Transverse colon (tissue), 4 donors: ENCODE measurements at regions of chrX and their contacts with region 1.

Region 1: DNA sequence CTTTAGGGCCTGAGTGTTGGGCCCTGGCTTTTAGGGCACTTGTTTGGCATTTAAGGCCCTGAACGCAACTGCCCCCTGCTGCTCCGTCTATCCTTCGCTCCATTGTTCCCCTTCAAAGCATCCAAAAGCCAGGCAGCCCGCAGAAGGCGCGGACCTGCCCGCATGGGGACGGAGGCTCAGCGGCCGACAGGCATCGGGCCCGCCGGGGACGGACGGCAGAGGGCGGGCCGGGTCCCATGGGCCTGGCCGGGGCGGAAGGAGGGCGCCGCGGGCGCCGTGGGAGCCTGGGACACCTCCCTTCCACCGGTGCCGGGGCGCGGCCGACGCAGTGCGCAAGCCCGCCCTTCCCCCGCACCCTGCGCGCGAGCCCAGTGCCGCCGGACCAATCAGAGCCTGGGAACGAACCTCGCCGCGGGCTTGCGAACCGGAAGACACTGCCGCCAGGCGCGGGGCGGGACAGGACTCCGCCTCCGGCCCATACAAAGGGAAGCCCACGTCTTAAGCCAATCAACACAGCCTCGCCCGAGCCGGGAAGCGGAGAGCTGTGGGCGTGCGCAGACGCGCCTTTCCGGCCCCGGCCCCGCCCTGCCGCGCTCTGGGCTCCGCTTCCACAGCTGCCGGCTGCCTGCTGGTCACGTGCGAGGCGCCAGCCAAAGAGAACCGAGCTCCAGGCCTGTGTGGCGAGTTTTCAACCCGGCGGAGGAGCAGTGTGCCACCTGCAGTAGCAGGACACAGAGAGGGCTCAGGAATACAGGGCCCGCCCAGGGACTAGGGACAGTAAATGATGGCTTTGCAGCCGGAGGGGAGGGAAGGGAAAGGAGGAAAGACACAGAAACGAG is 2.1 kb upstream of the ARHGAP4 start:
- DNase-seq: peak; percentile 96
- H3K4me3 ChIP-seq: peak overlapping the region; percentile 52 to 63 (median 53)
- H3K27ac ChIP-seq: peak overlapping the region; percentile 96 to 99 (median 98)
- H3K4me1 ChIP-seq: peaks cover 7 to 26% (median 16%) of the 10 kb centered on the region in 4 donors
- H3K27me3 ChIP-seq: no peaks in the 10 kb centered on the region
- CTCF ChIP-seq: no peak
- EP300 ChIP-seq: no peak
- POLR2A ChIP-seq: peak; percentile 65

Region 2: GRCh38 chrX:153794018-153794896 is 133.9 kb before region 1 on chrX and contains the starts of genes IDH3G and SSR4:
- in situ Hi-C with region 1: loop called in 1 of 4 experiments (anchors 25 kb)
- intact Hi-C with region 1: no loop called
- DNase-seq: peak; percentile 93
- H3K4me3 ChIP-seq: peak within 1 kb of the TSS; percentile 52 to 79 (median 68)
- H3K27ac ChIP-seq: peak within 1 kb of the TSS; percentile 91 to 99 (median 98)
- H3K4me1 ChIP-seq: peaks cover 0 to 26% (median 22%) of the 10 kb centered on the region in 4 donors
- H3K27me3 ChIP-seq: no peaks in the 10 kb centered on the region
- CTCF ChIP-seq: peak in 1 of 5 experiments; percentile 17
- EP300 ChIP-seq: no peak
- POLR2A ChIP-seq: peak; percentile 52
- total RNA-seq, gene IDH3G: 77.5 to 203 (median 117) TPM
- total RNA-seq, gene SSR4: 16.1 to 165 (median 95.8) TPM